AG04449 (cell line): ENCODE measurements at regions of chr12 and their contacts with region 1.

Region 1: GRCh38 chr12:47949441-47950308 is 13.7 kb upstream of the TMEM106C start:
- DNase-seq: peak; percentile 23
- H3K4me3 ChIP-seq: no peak overlapping the region
- CTCF ChIP-seq: peak; percentile 97

Region 2: GRCh38 chr12:47343677-47344567 is 605.8 kb before region 1 on chr12:
- CTCF ChIA-PET with region 1: no interaction called
- POLR2A ChIA-PET with region 1: no interaction called
- DNase-seq: peak; percentile 37
- H3K4me3 ChIP-seq: no peak overlapping the region
- CTCF ChIP-seq: no peak

Region 3: DNA sequence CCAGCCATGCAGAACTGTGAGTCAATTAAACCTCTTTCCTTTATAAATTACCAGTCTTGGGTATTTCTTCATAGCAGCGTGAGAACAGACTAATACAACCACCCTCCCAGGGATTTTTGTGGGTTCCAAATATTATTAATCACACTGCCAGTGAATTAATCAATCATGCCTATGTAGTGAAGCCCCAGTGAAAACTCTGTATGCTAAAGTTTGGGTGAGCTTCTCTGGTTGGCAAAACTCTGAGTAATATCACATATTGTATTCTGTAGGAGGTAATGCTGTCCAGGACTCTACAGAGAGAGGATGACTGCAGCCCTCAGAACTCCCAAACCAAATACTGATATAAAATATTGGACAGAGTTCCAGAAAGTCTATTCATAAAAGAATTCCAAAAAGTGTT is 460.8 kb before region 1 on chr12:
- CTCF ChIA-PET with region 1: no interaction called
- POLR2A ChIA-PET with region 1: no interaction called
- DNase-seq: no peak
- H3K4me3 ChIP-seq: no peak overlapping the region
- CTCF ChIP-seq: no peak

Region 4: DNA sequence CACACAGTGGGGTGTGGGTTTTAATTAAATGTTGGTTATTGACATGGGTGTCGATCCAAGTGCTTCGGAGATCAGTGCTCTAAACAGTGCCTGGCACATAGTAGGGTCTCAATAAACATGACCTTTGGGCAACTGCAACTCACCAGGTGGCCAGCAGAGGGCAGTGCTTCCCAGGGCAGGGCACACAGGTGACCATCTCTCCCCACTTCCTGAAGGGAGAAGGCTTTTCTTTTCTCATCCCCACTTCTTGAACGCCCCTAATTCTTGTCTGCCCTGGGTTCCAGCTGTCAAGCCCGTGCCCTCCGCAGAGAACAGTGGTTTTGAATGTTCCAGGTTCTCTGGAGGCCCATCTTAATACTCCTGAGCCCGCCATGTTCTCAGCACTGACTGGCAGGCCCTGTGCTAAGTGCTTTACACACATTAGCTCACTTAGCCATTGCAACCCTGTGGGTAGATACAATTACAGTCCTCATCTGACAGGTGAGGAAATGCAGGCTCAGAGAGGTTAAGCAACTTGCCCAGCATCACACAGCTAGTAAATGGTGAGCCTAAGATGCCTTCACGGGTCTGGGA is 207.3 kb before region 1 on chr12:
- CTCF ChIA-PET with region 1: interaction called, 28 read pairs
- POLR2A ChIA-PET with region 1: no interaction called
- DNase-seq: no peak
- H3K4me3 ChIP-seq: no peak overlapping the region
- CTCF ChIP-seq: peak; percentile 97

Region 5: GRCh38 chr12:47762850-47763465 is 186.7 kb before region 1 on chr12:
- CTCF ChIA-PET with region 1: no interaction called
- POLR2A ChIA-PET with region 1: no interaction called
- DNase-seq: no peak
- H3K4me3 ChIP-seq: no peak overlapping the region
- CTCF ChIP-seq: no peak

Region 6: DNA sequence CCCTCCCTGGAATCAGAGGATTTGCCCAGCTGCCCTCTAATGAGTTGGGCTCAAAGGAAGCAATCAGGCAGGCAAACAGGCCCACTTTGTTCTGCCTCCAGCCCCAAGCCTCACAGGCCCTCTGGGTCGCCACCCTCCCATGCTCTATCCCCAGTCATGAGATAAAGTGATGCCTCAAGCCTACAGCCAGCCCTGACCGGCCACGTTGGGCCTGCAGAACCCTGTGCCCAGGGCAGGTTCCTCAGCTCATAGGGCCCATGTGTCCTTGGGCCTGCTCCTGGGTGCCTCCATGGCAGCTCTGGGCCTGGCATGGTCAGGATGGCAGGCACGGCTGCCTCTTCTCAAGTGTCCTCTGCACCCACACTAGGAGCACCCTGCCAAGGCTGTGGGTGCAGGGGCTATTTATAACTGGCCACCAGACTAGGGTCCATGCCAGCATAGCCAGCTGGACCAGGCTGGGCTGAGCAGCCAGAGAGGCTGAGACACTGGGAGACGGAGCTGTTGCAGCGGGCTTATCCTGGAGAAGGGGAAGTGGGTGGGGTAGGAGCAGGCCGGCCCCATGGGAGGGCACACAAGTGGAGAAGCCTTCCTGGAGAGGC is 150.2 kb before region 1 on chr12:
- CTCF ChIA-PET with region 1: no interaction called
- POLR2A ChIA-PET with region 1: no interaction called
- DNase-seq: no peak
- H3K4me3 ChIP-seq: no peak overlapping the region
- CTCF ChIP-seq: no peak

Region 7: GRCh38 chr12:47881826-47882427 is 67.7 kb before region 1 on chr12:
- CTCF ChIA-PET with region 1: interaction called, 11 read pairs
- POLR2A ChIA-PET with region 1: no interaction called
- DNase-seq: peak; percentile 97
- H3K4me3 ChIP-seq: no peak overlapping the region
- CTCF ChIP-seq: no peak

Region 8: GRCh38 chr12:47904713-47905310 is 44.9 kb before region 1 on chr12 and contains the start of gene VDR:
- CTCF ChIA-PET with region 1: interaction called, 25 read pairs
- POLR2A ChIA-PET with region 1: no interaction called
- DNase-seq: no peak
- H3K4me3 ChIP-seq: peak within 1 kb of the TSS; percentile 72
- CTCF ChIP-seq: peak; percentile 11

Region 9: GRCh38 chr12:47927346-47927745 is 22.3 kb before region 1 on chr12:
- CTCF ChIA-PET with region 1: interaction called, 35 read pairs
- POLR2A ChIA-PET with region 1: no interaction called
- DNase-seq: no peak
- H3K4me3 ChIP-seq: no peak overlapping the region
- CTCF ChIP-seq: no peak

Region 10: GRCh38 chr12:47963340-47964040 is 13.8 kb after region 1 on chr12 and contains the start of gene TMEM106C:
- CTCF ChIA-PET with region 1: interaction called, 163 read pairs
- POLR2A ChIA-PET with region 1: no interaction called
- DNase-seq: peak; percentile 38
- H3K4me3 ChIP-seq: peak within 1 kb of the TSS; percentile 97
- CTCF ChIP-seq: peak; percentile 99